Activated CD8-positive, alpha-beta memory T cell treated with anti-CD3 and anti-CD28 coated beads, Interleukin-2, amount 10 ng/mL, durations not matched to agents 7 days and 5 days (primary cell): ENCODE measurements at regions of chr1 and their contacts with region 1.

Region 1: DNA sequence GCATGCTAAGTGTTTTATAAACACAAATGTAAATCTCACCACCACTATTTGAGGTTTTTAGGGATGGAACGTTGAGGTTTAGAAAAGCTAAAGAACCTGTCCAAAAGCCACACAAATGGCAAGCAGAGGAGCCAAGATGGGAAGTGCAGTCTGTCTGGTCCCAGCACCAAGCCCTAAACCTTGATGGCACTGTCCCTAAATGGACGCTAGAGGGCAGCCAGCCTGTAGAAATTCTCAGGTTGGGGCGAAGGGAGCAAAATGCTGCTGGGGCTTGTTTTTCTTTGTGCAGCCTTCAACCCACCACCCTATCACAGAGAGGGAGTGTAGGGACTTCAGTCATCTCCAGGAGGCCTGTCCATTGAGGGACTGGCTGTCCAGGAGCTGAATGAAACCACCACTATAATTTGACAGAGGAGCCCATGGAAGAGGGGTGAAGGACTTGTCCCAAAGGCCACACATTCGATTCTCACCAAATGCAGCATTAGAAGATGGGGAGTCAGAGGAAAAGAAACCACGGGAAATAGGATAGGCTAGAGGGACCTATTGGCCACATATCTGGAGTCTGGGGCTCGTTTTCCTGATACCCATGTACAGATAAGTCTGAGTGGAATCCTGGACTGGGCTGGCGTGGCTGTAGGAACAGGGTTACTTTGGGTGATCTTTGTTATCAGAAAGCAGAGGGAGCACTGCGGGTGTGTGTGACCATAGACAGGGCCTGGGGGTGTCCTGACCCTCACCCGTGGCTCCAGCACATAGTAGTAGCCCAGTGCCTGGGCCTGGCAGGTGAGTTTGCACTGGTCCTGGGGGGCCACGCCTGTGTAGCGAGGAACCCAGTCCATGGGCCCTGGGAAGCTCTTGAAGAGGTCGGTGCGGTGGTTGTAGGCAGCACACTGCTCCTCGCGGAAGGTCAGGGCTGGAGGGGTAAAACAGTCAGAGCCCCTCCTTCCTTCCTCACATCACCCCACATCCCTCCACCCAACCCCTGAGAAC is 6.1 kb downstream of the ADAMTS4 start:
- DNase-seq: peak; percentile 82
- ATAC-seq: peak; percentile 94
- H3K4me3 Mint-ChIP-seq: no peak overlapping the region
- H3K27ac Mint-ChIP-seq: peak overlapping the region; percentile 83
- H3K4me1 Mint-ChIP-seq: peaks cover 42% of the 10 kb centered on the region
- H3K27me3 Mint-ChIP-seq: no peaks in the 10 kb centered on the region

Region 2: DNA sequence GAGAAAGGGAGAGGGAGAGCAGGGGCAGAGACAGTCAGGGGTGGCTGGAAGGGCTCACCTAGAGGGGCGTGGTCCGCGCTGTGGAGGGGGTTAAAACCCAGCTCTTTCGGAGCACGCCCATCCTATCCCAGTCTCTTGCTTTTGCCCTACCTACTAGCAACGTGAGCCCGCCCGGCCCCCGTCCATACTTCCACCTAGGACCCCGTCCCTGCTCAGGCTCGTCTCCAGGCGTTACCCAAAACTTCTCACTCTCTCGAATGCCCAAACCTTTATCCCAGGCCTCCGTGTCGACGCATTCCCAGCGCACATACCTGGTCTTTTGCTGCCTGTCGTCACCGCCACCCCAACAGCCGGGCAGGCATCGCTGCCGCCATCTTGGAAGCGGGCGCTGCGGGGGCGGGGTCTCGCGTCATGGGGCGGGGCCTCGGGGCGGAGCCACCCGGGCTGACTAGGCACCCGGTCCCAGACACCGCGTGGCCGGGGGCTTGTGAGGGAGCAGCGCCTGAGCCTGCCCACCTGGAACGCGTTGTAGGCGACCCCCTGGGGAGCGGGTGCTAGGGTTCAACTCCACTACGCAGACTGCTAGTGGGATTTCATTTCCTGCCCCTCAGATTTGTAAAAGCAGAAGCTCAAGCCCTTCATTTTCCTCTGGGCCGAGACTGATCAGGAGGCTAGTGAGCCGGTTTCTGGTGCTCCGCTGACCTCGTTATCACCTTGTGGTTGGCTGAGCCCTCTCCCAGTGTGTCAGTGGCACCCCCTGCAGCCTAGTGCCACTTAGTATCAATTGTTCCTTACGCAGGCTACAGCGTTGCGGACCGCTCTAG is 15.4 kb before region 1 on chr1 and contains the start of gene B4GALT3:
- CTCF ChIA-PET with region 1: interaction called, 61 read pairs
- DNase-seq: peak; percentile 94
- ATAC-seq: peak; percentile 92
- H3K4me3 Mint-ChIP-seq: peak within 1 kb of the TSS; percentile 99
- H3K27ac Mint-ChIP-seq: peak within 1 kb of the TSS; percentile 99
- H3K4me1 Mint-ChIP-seq: peaks cover 58% of the 10 kb centered on the region
- H3K27me3 Mint-ChIP-seq: no peaks in the 10 kb centered on the region
- total RNA-seq, gene B4GALT3: 47.0 to 53.5 TPM

Region 3: GRCh38 chr1:161216945-161217712 is 24.4 kb after region 1 on chr1:
- CTCF ChIA-PET with region 1: interaction called, 10 read pairs
- DNase-seq: peak; percentile 63
- ATAC-seq: peak; percentile 62
- H3K4me3 Mint-ChIP-seq: no peak overlapping the region
- H3K27ac Mint-ChIP-seq: peak overlapping the region; percentile 44
- H3K4me1 Mint-ChIP-seq: peaks cover 32% of the 10 kb centered on the region
- H3K27me3 Mint-ChIP-seq: no peaks in the 10 kb centered on the region

Region 4: DNA sequence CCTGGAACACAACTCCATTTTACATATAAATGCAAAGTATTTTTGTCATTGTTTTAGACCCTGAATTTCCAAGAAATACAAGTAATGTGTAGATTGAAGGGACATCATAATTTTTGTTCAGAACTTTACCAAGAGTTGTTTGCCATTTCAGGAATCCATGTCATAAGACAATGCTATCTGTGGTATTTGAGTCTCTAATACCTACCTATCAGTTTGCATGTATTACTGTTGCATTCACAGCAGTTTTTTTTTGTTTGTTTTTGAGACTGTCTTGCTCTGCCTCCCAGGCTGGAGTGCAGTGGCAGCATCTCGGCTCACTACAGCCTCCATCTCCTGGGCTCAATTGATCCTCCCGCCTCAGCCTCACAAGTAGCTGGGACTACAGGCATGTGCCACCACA is 99.9 kb after region 1 on chr1:
- CTCF ChIA-PET with region 1: interaction called, 19 read pairs
- DNase-seq: no peak
- ATAC-seq: no peak
- H3K4me3 Mint-ChIP-seq: no peak overlapping the region
- H3K27ac Mint-ChIP-seq: no peak overlapping the region
- H3K4me1 Mint-ChIP-seq: peaks cover 4% of the 10 kb centered on the region
- H3K27me3 Mint-ChIP-seq: no peaks in the 10 kb centered on the region

Region 5: GRCh38 chr1:161359291-161359690 is 166.5 kb after region 1 on chr1:
- CTCF ChIA-PET with region 1: no interaction called
- DNase-seq: no peak
- ATAC-seq: no peak
- H3K4me3 Mint-ChIP-seq: no peak overlapping the region
- H3K27ac Mint-ChIP-seq: no peak overlapping the region
- H3K4me1 Mint-ChIP-seq: peaks cover 10% of the 10 kb centered on the region
- H3K27me3 Mint-ChIP-seq: no peaks in the 10 kb centered on the region